ENCODE measurements at regions of chr5 and their contacts with region 1.

Region 1: GRCh38 chr5:63125862-63126261 is 547.2 kb downstream of the LRRC70 start:
- DNase-seq: peak; percentile 41
- H3K4me3 ChIP-seq: no peak overlapping the region
- H3K27ac ChIP-seq: no peak overlapping the region
- H3K4me1 ChIP-seq: peaks cover 16% of the 10 kb centered on the region
- H3K27me3 ChIP-seq: no peaks in the 10 kb centered on the region
- CTCF ChIP-seq: peak; percentile 61 to 68

Region 2: GRCh38 chr5:63255609-63256008 is 129.7 kb after region 1 on chr5:
- CTCF ChIA-PET with region 1: no interaction called
- dilution Hi-C with region 1: no loop called
- in situ Hi-C with region 1: no loop called
- intact Hi-C with region 1: loop called (anchors 5 kb)
- DNase-seq: no peak
- H3K4me3 ChIP-seq: no peak overlapping the region
- H3K27ac ChIP-seq: no peak overlapping the region
- H3K4me1 ChIP-seq: no peaks in the 10 kb centered on the region
- H3K27me3 ChIP-seq: no peaks in the 10 kb centered on the region
- CTCF ChIP-seq: no peak

Region 3: GRCh38 chr5:63411936-63412335 is 286.1 kb after region 1 on chr5:
- CTCF ChIA-PET with region 1: no interaction called
- dilution Hi-C with region 1: no loop called
- in situ Hi-C with region 1: no loop called
- intact Hi-C with region 1: no loop called
- DNase-seq: no peak
- H3K4me3 ChIP-seq: no peak overlapping the region
- H3K27ac ChIP-seq: no peak overlapping the region
- H3K4me1 ChIP-seq: no peaks in the 10 kb centered on the region
- H3K27me3 ChIP-seq: no peaks in the 10 kb centered on the region
- CTCF ChIP-seq: no peak

Region 4: DNA sequence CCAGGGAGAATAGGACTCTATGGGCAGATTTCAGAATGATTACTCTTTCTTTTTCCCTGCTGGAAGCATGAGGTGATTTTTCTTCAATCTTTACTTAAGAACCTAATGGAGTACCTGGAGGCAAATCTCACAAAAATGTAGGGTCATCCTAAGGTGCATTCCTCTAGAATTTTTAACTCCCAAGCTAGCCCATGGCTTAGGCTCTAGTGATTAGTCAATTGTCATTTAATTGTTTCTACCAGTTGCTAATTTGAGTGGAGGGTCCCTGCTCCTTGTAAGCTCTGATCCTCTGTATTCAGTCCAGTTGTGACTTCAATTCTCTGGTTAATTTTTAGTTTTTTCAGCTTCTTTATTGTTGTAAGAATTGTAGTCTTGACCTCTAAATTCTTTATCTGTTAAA is 369.4 kb after region 1 on chr5:
- CTCF ChIA-PET with region 1: no interaction called
- dilution Hi-C with region 1: no loop called
- in situ Hi-C with region 1: no loop called
- intact Hi-C with region 1: no loop called
- DNase-seq: no peak
- H3K4me3 ChIP-seq: no peak overlapping the region
- H3K27ac ChIP-seq: no peak overlapping the region
- H3K4me1 ChIP-seq: no peaks in the 10 kb centered on the region
- H3K27me3 ChIP-seq: no peaks in the 10 kb centered on the region
- CTCF ChIP-seq: no peak

Region 5: DNA sequence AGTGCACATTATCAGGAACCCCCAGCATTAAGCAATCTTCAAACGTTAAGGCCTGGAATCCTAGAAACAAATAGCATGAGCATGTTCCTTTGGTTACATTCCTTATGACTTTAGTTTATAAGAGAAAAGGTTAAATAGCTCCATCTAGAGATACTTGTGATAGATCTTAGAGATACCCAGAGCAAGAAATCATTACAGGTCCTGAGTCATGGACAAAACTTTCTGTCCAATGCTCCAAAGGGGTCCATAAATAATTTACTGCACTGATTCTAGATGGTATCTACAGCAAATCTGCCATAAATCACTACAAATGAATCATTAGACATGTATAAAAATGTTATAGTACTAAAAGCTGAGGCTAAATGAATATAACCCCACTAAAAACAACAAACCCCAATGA is 696.8 kb after region 1 on chr5:
- CTCF ChIA-PET with region 1: no interaction called
- dilution Hi-C with region 1: no loop called
- in situ Hi-C with region 1: no loop called
- intact Hi-C with region 1: loop called (anchors 2 kb)
- DNase-seq: no peak
- H3K4me3 ChIP-seq: no peak overlapping the region
- H3K27ac ChIP-seq: no peak overlapping the region
- H3K4me1 ChIP-seq: no peaks in the 10 kb centered on the region
- H3K27me3 ChIP-seq: no peaks in the 10 kb centered on the region
- CTCF ChIP-seq: peak in 1 of 2 donors; percentile 35

Region 6: GRCh38 chr5:63963080-63963735 is 837.3 kb after region 1 on chr5:
- CTCF ChIA-PET with region 1: no interaction called
- dilution Hi-C with region 1: no loop called
- in situ Hi-C with region 1: no loop called
- intact Hi-C with region 1: loop called (anchors 2 kb)
- DNase-seq: peak; percentile 53
- H3K4me3 ChIP-seq: no peak overlapping the region
- H3K27ac ChIP-seq: no peak overlapping the region
- H3K4me1 ChIP-seq: no peaks in the 10 kb centered on the region
- H3K27me3 ChIP-seq: peaks cover 25% of the 10 kb centered on the region
- CTCF ChIP-seq: peak; percentile 70 to 88